ENCODE measurements at regions of chr5 and their contacts with region 1.

Region 1: GRCh38 chr5:138869763-138870500 is 5.2 kb downstream of the LRRTM2 start:
- DNase-seq: peak; percentile 56
- H3K4me3 ChIP-seq: peak overlapping the region in 2 of 3 experiments; percentile 31 to 45
- H3K27ac ChIP-seq: peak overlapping the region; percentile 71
- H3K4me1 ChIP-seq: peaks cover 55% of the 10 kb centered on the region
- H3K27me3 ChIP-seq: no peaks in the 10 kb centered on the region
- CTCF ChIP-seq: no peak

Region 2: GRCh38 chr5:138824924-138825863 is 44.7 kb before region 1 on chr5:
- CTCF ChIA-PET with region 1: no interaction called
- dilution Hi-C with region 1: no loop called
- in situ Hi-C with region 1: no loop called
- intact Hi-C with region 1: loop called (anchors 2 kb)
- DNase-seq: no peak
- H3K4me3 ChIP-seq: no peak overlapping the region
- H3K27ac ChIP-seq: no peak overlapping the region
- H3K4me1 ChIP-seq: no peaks in the 10 kb centered on the region
- H3K27me3 ChIP-seq: no peaks in the 10 kb centered on the region
- CTCF ChIP-seq: peak; percentile 58 to 66

Measured in mammary epithelial cell (primary cell).